Posterior vena cava (tissue), 2 donors: ENCODE measurements at regions of chr10 and their contacts with region 1.

Region 1: GRCh38 chr10:6737758-6738505 is 157.9 kb upstream of the PRKCQ start:
- DNase-seq: peak; percentile 71

Region 2: GRCh38 chr10:5999438-6000165 is 738.3 kb before region 1 on chr10:
- intact Hi-C with region 1: loop called in 1 of 2 experiments (anchors 5 kb)
- DNase-seq: no peak

Region 3: GRCh38 chr10:6337382-6337781 is 400.6 kb before region 1 on chr10:
- intact Hi-C with region 1: no loop called
- DNase-seq: no peak

Region 4: GRCh38 chr10:6786579-6787031 is 48.7 kb after region 1 on chr10:
- intact Hi-C with region 1: no loop called
- DNase-seq: no peak

Region 5: GRCh38 chr10:7205656-7206055 is 467.7 kb after region 1 on chr10:
- intact Hi-C with region 1: no loop called
- DNase-seq: no peak